ENCODE measurements at regions of chr5 and their contacts with region 1.

Region 1: DNA sequence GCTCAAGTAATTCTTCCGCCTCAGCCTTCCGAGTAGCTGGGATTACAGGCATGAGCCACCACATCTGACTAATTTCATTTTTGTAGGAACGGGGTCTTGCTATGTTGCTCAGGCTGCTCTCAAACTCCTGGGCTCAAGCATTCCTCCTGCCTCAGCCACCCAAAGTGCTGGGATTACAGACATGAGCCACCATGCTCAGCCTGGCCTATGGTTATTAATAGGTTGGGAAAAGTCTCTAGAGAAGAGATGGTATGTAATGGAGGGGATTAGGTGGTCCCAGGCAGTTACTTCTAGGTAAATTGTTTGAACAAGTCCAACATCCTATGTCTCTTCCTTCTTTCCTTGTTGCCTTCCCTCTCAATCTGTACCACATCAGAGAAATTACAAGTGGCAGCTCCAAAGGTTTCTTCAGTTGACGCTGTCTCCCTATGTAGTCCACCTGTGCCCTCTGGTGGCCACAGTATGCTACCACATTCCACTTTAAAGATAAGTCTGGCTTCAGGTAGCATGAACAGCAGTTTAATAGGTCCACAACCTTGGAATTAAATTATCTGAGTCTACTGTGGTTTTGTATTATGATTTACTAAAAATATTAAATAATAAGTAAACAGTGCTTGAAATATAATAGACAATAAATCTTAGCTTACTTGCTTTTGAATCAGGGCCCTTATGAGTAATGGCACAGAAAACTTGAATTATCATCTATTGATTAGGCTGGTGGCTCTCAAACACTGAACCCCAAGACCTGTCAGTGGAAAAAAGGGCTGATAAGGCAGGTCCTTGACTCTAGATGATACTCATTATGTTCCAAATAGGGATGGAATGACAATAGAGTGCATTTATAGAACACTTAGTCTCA is 9.7 kb downstream of the TIGD6 start:
- DNase-seq: peak; percentile 47
- H3K4me3 Mint-ChIP-seq: no peak overlapping the region
- H3K27ac Mint-ChIP-seq: no peak overlapping the region
- H3K4me1 Mint-ChIP-seq: peaks cover 5% of the 10 kb centered on the region
- H3K27me3 Mint-ChIP-seq: no peaks in the 10 kb centered on the region

Region 2: GRCh38 chr5:149636851-149637246 is 353.9 kb before region 1 on chr5:
- intact Hi-C with region 1: loop called (anchors 1 kb)
- DNase-seq: no peak
- H3K4me3 Mint-ChIP-seq: no peak overlapping the region
- H3K27ac Mint-ChIP-seq: no peak overlapping the region
- H3K4me1 Mint-ChIP-seq: peaks cover 20% of the 10 kb centered on the region
- H3K27me3 Mint-ChIP-seq: peaks cover 2% of the 10 kb centered on the region

Region 3: GRCh38 chr5:149667084-149667828 is 323.5 kb before region 1 on chr5:
- intact Hi-C with region 1: loop called (anchors 1 kb)
- DNase-seq: no peak
- H3K4me3 Mint-ChIP-seq: no peak overlapping the region
- H3K27ac Mint-ChIP-seq: no peak overlapping the region
- H3K4me1 Mint-ChIP-seq: peaks cover 4% of the 10 kb centered on the region
- H3K27me3 Mint-ChIP-seq: peaks cover 6% of the 10 kb centered on the region

Region 4: DNA sequence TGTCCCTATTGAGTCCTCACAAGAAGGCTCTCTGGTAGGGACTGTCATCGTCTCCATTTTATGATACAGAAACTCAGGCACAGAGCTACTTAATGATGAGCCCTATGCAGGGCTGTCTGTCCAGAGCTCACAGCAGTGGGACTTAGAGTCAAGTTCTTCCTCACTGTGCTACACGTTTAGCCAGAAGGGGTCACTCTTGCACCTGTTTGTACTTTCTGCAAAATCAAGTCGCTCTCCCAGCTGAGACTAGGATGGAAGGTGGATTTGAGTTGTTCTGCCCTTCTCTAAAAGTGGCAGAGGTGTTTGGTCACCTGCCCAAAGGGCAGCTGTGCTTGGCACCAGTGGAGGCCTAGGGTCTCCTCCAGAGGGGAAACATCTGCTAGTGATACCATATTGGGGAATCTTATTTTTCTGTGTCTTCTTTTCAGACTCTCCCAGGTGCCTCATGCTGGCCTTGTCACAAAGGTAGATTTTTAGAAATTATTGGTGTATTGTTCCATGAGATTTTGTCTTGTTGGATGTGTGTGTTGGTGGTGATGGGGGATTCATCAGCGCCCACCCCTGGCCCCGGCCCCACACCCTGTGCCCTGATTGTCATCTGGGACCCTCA is 156.4 kb before region 1 on chr5:
- intact Hi-C with region 1: loop called (anchors 1 kb)
- DNase-seq: peak; percentile 50
- H3K4me3 Mint-ChIP-seq: no peak overlapping the region
- H3K27ac Mint-ChIP-seq: no peak overlapping the region
- H3K4me1 Mint-ChIP-seq: peaks cover 13% of the 10 kb centered on the region
- H3K27me3 Mint-ChIP-seq: no peaks in the 10 kb centered on the region

Region 5: GRCh38 chr5:149852641-149853330 is 138.0 kb before region 1 on chr5:
- intact Hi-C with region 1: loop called (anchors 5 kb)
- DNase-seq: peak; percentile 14
- H3K4me3 Mint-ChIP-seq: no peak overlapping the region
- H3K27ac Mint-ChIP-seq: no peak overlapping the region
- H3K4me1 Mint-ChIP-seq: no peaks in the 10 kb centered on the region
- H3K27me3 Mint-ChIP-seq: no peaks in the 10 kb centered on the region

Measured in activated T-helper 1 cell treated with anti-CD3 and anti-CD28 coated beads, Interleukin-12 subunit alpha, Interleukin-12 subunit beta, Interleukin-2, Interleukin-4 antibody, amounts not matched to agents 30 ng/mL and 10 ng/mL and 1 ng/mL, durations not matched to agents 14 hours and 24 hours and 36 hours (primary cell).